PC-3 (cell line): ENCODE measurements at regions of chr7 and their contacts with region 1.

Region 1: GRCh38 chr7:94382132-94382531 is 12.6 kb upstream of the COL1A2 start:
- DNase-seq: peak; percentile 65
- ATAC-seq: peak; percentile 43
- H3K4me3 ChIP-seq: peak overlapping the region; percentile 16; the same call in 1 of the 2 replicates
- H3K27ac ChIP-seq: peak overlapping the region; percentile 86
- H3K4me1 ChIP-seq: peaks cover 22% of the 10 kb centered on the region
- H3K27me3 ChIP-seq: no peaks in the 10 kb centered on the region
- CTCF ChIP-seq: no peak

Region 2: GRCh38 chr7:94266238-94266644 is 115.9 kb before region 1 on chr7:
- CTCF ChIA-PET with region 1: no interaction called
- POLR2A ChIA-PET with region 1: no interaction called
- intact Hi-C with region 1: no loop called
- DNase-seq: no peak
- ATAC-seq: no peak
- H3K4me3 ChIP-seq: no peak overlapping the region
- H3K27ac ChIP-seq: no peak overlapping the region
- H3K4me1 ChIP-seq: no peaks in the 10 kb centered on the region
- H3K27me3 ChIP-seq: 0 out of 2 replicates have a peak, but pooled peaks cover 4% of the 10 kb centered on the region
- CTCF ChIP-seq: no peak

Region 3: DNA sequence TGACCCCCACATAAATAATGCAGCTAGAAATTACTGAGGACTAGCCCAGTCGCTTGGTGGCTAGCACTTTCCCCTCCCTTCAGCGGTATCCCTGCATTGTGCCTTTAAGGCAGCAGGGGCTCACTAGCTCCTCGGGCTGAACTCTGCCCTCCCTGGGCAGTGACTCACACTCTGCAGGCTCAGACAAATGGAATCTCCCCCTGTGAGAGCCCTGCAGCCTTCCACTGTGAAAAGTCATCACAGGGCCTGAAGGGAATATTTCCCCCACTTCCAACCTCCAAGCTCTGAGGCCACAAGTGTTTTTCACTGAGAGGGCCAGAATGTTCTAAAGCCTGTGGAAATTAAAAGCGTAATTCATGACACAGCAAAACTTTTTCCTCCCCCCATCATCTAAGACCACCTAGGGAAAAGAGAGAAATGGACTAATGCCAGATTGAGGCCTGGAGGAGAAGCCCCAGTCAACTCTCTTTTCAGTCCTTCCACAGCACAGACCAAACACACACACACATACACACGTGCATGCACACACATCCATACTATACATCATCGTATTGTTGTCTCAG is 81.0 kb before region 1 on chr7:
- CTCF ChIA-PET with region 1: no interaction called
- POLR2A ChIA-PET with region 1: no interaction called
- intact Hi-C with region 1: loop called (anchors 1 kb)
- DNase-seq: peak; percentile 91
- ATAC-seq: peak; percentile 98
- H3K4me3 ChIP-seq: peak overlapping the region; percentile 46; the same call in 1 of the 2 replicates
- H3K27ac ChIP-seq: peak overlapping the region; percentile 95
- H3K4me1 ChIP-seq: peaks cover 49% of the 10 kb centered on the region
- H3K27me3 ChIP-seq: no peaks in the 10 kb centered on the region
- CTCF ChIP-seq: no peak

Region 4: DNA sequence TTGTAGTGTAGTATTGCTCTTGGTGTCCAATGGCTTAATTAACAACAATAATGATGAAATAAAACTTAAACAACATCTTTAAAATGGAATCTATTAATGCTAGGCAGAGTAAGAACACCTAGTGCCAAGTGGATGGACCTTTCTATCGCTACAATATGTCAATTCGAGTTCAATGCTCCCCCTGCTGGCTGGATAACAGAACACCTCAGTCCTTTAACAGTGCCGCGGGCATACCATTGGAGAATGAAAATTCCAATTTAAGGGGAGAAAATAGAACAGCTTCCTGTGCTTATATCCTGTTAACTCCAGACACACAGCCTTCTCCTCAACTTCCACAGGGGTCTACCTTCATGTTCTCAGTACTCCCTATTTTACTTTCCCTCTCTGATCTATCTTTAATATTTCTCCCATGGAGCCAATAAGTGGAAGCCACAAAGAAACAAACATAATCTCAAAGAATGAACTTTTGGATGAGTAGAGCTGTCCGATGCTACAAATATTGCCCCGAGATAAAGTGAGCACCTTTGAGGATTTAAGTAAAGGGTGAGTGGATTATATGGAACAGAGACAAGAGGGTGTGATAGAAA is 54.0 kb after region 1 on chr7:
- CTCF ChIA-PET with region 1: no interaction called
- POLR2A ChIA-PET with region 1: no interaction called
- intact Hi-C with region 1: no loop called
- DNase-seq: peak; percentile 82
- ATAC-seq: peak; percentile 99
- H3K4me3 ChIP-seq: no peak overlapping the region; the same call in 1 of the 2 replicates
- H3K27ac ChIP-seq: no peak overlapping the region
- H3K4me1 ChIP-seq: no peaks in the 10 kb centered on the region
- H3K27me3 ChIP-seq: no peaks in the 10 kb centered on the region
- CTCF ChIP-seq: peak; percentile 89

Region 5: GRCh38 chr7:94697035-94697974 is 315.2 kb after region 1 on chr7:
- CTCF ChIA-PET with region 1: no interaction called
- POLR2A ChIA-PET with region 1: no interaction called
- intact Hi-C with region 1: loop called (anchors 5 kb)
- DNase-seq: peak; percentile 96
- ATAC-seq: peak; percentile 66
- H3K4me3 ChIP-seq: peak overlapping the region; percentile 51
- H3K27ac ChIP-seq: peak overlapping the region; percentile 85
- H3K4me1 ChIP-seq: peaks cover 40% of the 10 kb centered on the region
- H3K27me3 ChIP-seq: no peaks in the 10 kb centered on the region
- CTCF ChIP-seq: no peak